ENCODE measurements at regions of chr11 and their contacts with region 1.

Region 1: GRCh38 chr11:62726915-62727763 is at the start of gene HNRNPUL2:
- DNase-seq: peak; percentile 99
- H3K4me3 ChIP-seq: peak within 1 kb of the TSS; percentile 99
- H3K27ac ChIP-seq: peak within 1 kb of the TSS; percentile 98
- H3K27me3 ChIP-seq: no peaks in the 10 kb centered on the region
- CTCF ChIP-seq: 0 out of 2 replicates have a peak, but pooled peaks have one; percentile 11
- polyA plus RNA-seq, gene HNRNPUL2: 26.6 and 28.2 TPM in 2 replicates

Region 2: GRCh38 chr11:62671575-62672389 is 55.4 kb before region 1 on chr11 and contains the starts of genes LBHD1 and UQCC3:
- CTCF ChIA-PET with region 1: interaction called, 6 read pairs
- POLR2A ChIA-PET with region 1: interaction called, 17 read pairs
- DNase-seq: peak; percentile 65
- H3K4me3 ChIP-seq: peak within 1 kb of the TSS; percentile 84
- H3K27ac ChIP-seq: peak within 1 kb of the TSS; percentile 81
- H3K27me3 ChIP-seq: no peaks in the 10 kb centered on the region
- CTCF ChIP-seq: no peak
- polyA plus RNA-seq, gene LBHD1: 2.4 and 3.2 TPM in 2 replicates
- polyA plus RNA-seq, gene UQCC3: 5.4 and 6.2 TPM in 2 replicates

Region 3: DNA sequence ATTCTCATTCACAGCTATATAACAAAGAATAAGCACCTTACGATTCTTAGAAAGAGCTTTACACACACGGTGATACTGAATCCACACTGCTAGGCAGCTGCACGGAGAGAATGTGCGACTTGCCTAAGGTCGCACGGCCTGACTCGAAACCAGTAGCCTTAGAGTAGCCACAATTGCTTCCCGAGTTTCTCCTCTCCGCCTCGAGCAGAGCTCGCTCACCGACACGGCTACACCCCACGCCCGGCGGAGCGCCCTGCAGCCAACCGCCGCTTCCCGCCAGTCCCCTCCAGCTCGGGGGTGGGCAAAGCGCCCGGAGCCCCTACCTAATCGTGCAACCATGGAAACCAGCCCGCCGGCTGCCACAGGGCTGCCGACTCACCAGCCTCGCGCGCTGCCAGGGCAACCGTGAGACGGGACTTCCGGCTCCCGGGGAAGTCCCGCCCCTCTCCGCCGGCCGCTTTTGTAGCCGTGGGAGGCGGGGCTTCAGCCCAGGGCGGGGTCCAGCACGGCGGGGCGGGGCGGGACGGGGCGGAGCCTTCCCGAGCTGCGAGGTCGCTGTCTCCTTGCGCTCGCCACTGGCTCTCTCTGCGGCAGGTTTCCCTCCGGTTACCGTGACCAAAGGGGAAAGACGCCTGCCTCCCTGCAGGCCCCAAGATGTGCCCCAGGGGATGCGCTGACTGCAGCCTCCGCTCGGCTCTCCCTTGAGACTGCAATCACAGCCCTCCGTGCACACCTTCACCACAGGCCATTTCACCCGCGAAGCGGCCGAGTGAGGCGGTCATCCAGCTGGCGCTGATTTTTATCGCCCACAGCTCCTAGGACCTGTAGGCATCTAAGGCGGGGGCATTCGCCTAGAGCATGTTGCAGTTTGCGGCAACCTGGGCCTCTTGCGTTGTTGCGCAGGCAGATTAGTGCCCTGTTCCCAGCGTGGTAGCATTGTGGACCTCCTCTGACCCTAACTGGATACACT is 21.0 kb before region 1 on chr11:
- CTCF ChIA-PET with region 1: interaction called, 3 read pairs
- POLR2A ChIA-PET with region 1: interaction called, 11 read pairs
- DNase-seq: peak; percentile 79
- H3K4me3 ChIP-seq: peak overlapping the region; percentile 76
- H3K27ac ChIP-seq: peak overlapping the region; percentile 86
- H3K27me3 ChIP-seq: no peaks in the 10 kb centered on the region
- CTCF ChIP-seq: no peak

Region 4: GRCh38 chr11:62753736-62754603 is 26.8 kb after region 1 on chr11 and contains the start of gene ZBTB3:
- CTCF ChIA-PET with region 1: interaction called, 10 read pairs
- POLR2A ChIA-PET with region 1: interaction called, 15 read pairs
- DNase-seq: peak; percentile 97
- H3K4me3 ChIP-seq: peak within 1 kb of the TSS; percentile 94
- H3K27ac ChIP-seq: peak within 1 kb of the TSS; percentile 80
- H3K27me3 ChIP-seq: no peaks in the 10 kb centered on the region
- CTCF ChIP-seq: no peak
- polyA plus RNA-seq, gene ZBTB3: 3.2 and 3.7 TPM in 2 replicates